Activated CD8-positive, alpha-beta memory T cell treated with anti-CD3 and anti-CD28 coated beads, Interleukin-2, amount 10 ng/mL, durations not matched to agents 7 days and 5 days (primary cell): ENCODE measurements at regions of chr12 and their contacts with region 1.

Region 1: DNA sequence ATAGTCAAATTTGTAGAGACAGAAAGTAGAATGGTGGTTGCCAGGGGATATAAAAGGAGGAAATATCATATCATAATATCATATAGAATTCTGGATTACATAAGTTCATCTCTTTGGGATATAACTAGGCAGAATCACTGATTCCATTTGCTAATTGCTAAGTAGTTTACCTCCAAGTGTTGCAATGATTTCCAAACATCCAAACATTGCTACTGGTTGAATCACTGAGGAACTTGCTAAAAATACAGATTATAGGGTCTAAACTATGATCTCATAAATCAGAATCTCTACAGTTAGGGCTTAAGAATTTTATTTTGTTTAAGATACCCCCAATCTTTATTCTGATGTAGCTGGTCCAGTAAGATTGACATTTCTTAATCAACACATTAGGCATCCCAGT is 16.1 kb upstream of the TAS2R42 start:
- DNase-seq: no peak
- ATAC-seq: no peak
- H3K4me3 Mint-ChIP-seq: no peak overlapping the region
- H3K27ac Mint-ChIP-seq: no peak overlapping the region
- H3K4me1 Mint-ChIP-seq: no peaks in the 10 kb centered on the region
- H3K27me3 Mint-ChIP-seq: no peaks in the 10 kb centered on the region

Region 2: GRCh38 chr12:10771132-10771733 is 431.6 kb before region 1 on chr12:
- CTCF ChIA-PET with region 1: interaction called, 10 read pairs
- DNase-seq: no peak
- ATAC-seq: no peak
- H3K4me3 Mint-ChIP-seq: no peak overlapping the region
- H3K27ac Mint-ChIP-seq: no peak overlapping the region
- H3K4me1 Mint-ChIP-seq: no peaks in the 10 kb centered on the region
- H3K27me3 Mint-ChIP-seq: peaks cover 71% of the 10 kb centered on the region